ENCODE measurements at regions of chr1 and their contacts with region 1.

Region 1: GRCh38 chr1:30366911-30367310 is 356.5 kb downstream of the MATN1 start:
- DNase-seq: no peak
- ATAC-seq: no peak
- H3K4me3 ChIP-seq: no peak overlapping the region
- H3K4me3 Mint-ChIP-seq: no peak overlapping the region
- H3K27ac ChIP-seq: no peak overlapping the region
- H3K27ac Mint-ChIP-seq: no peak overlapping the region
- H3K4me1 ChIP-seq: no peaks in the 10 kb centered on the region
- H3K4me1 Mint-ChIP-seq: no peaks in the 10 kb centered on the region
- H3K27me3 ChIP-seq: no peaks in the 10 kb centered on the region
- H3K27me3 Mint-ChIP-seq: peaks cover 12% of the 10 kb centered on the region
- CTCF ChIP-seq: no peak

Region 2: GRCh38 chr1:30300669-30301068 is 66.2 kb before region 1 on chr1:
- CTCF ChIA-PET with region 1: no interaction called
- POLR2A ChIA-PET with region 1: no interaction called
- intact Hi-C with region 1: no loop called
- DNase-seq: no peak
- ATAC-seq: no peak
- H3K4me3 ChIP-seq: no peak overlapping the region
- H3K4me3 Mint-ChIP-seq: no peak overlapping the region
- H3K27ac ChIP-seq: no peak overlapping the region
- H3K27ac Mint-ChIP-seq: no peak overlapping the region
- H3K4me1 ChIP-seq: no peaks in the 10 kb centered on the region
- H3K4me1 Mint-ChIP-seq: no peaks in the 10 kb centered on the region
- H3K27me3 ChIP-seq: no peaks in the 10 kb centered on the region
- H3K27me3 Mint-ChIP-seq: peaks cover 16% of the 10 kb centered on the region
- CTCF ChIP-seq: no peak

Region 3: DNA sequence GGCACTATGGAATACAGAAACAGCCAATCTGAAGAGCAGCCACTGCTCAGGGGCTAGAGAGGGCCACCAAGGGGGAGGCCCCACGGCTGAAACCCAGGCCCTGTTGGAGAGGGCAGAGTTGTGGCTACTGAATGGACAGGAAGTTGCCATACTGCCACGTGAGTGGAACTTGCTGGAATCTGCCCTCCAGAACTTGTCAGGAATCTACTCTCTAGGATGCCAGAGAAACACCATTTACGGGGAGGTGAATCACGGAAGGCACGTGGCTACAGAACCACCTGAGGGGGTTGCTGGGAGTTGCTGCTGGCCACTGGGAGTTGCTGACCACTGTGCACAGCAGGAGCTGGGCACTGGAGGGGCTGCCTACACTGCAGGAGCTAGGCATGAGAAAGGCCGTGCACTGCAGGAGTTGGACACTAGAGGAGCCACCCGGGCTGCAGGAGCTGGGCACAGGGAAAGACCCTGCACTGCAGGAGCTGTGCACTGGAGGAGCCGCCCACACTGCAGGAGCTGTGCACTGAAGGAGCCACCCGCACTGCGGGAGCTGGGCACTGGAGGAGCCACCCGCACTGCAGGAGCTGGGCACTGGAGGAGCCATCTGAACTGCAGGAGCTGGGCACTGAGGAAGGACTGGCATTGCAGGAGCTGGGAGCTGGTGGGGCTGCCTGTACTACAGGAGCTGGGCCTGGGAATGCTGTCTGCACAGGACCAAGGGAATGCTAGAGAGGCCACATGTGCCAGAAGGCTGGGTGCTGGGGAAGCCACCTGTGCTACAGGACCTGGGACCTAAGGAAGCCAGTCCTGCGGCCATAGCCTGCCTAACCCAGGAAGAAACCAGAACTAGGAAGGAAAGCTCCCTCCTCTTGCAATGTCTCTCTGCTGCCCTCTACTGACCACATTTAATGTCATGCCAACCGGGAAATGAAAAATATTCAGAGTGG is 13.0 kb after region 1 on chr1:
- CTCF ChIA-PET with region 1: interaction called, 15 read pairs
- POLR2A ChIA-PET with region 1: no interaction called
- intact Hi-C with region 1: no loop called
- DNase-seq: peak; percentile 75
- ATAC-seq: peak; percentile 51
- H3K4me3 ChIP-seq: no peak overlapping the region
- H3K4me3 Mint-ChIP-seq: no peak overlapping the region
- H3K27ac ChIP-seq: no peak overlapping the region
- H3K27ac Mint-ChIP-seq: no peak overlapping the region
- H3K4me1 ChIP-seq: no peaks in the 10 kb centered on the region
- H3K4me1 Mint-ChIP-seq: peaks cover 4% of the 10 kb centered on the region
- H3K27me3 ChIP-seq: peaks cover 0 to 3% (median 1%) of the 10 kb centered on the region in 4 experiments
- H3K27me3 Mint-ChIP-seq: peaks cover 30% of the 10 kb centered on the region
- CTCF ChIP-seq: peak; percentile 90

Region 4: GRCh38 chr1:30511991-30512913 is 145.3 kb after region 1 on chr1:
- CTCF ChIA-PET with region 1: no interaction called
- POLR2A ChIA-PET with region 1: no interaction called
- intact Hi-C with region 1: no loop called
- DNase-seq: no peak
- ATAC-seq: no peak
- H3K4me3 ChIP-seq: no peak overlapping the region
- H3K4me3 Mint-ChIP-seq: no peak overlapping the region
- H3K27ac ChIP-seq: no peak overlapping the region
- H3K27ac Mint-ChIP-seq: no peak overlapping the region
- H3K4me1 ChIP-seq: no peaks in the 10 kb centered on the region
- H3K4me1 Mint-ChIP-seq: no peaks in the 10 kb centered on the region
- H3K27me3 ChIP-seq: peaks cover 0 to 3% (median 0%) of the 10 kb centered on the region in 4 experiments
- H3K27me3 Mint-ChIP-seq: peaks cover 13% of the 10 kb centered on the region
- CTCF ChIP-seq: no peak